ENCODE measurements at regions of chr14 and their contacts with region 1.

Region 1: GRCh38 chr14:102251161-102251560 is 53.8 kb downstream of the MOK start:
- DNase-seq: no peak
- H3K4me3 ChIP-seq: no peak overlapping the region
- H3K27ac ChIP-seq: no peak overlapping the region
- H3K4me1 ChIP-seq: no peaks in the 10 kb centered on the region
- H3K27me3 ChIP-seq: no peaks in the 10 kb centered on the region
- CTCF ChIP-seq: no peak
- EP300 ChIP-seq: no peak
- RAD21 ChIP-seq: no peak

Region 2: DNA sequence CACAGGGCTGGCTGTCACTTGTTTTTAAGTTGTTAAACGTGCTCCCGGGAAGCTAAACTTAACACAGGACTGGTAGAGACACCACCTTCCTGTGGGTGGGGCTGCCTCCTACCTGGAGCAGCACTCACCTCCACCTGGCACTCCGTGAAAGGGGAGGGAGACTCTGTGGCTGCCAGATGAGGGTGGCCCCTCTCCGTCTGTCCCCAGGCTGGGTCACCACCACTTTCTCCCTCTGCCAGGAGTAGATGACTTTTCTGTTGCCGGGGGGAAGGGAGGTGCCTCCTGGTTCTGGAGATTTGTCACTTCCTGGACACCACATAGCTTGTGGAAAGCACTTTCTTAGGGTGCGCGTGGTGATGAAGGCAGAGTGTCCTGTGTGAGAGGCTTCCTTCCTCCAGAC is 30.1 kb before region 1 on chr14:
- CTCF ChIA-PET with region 1: no interaction called
- POLR2A ChIA-PET with region 1: no interaction called
- DNase-seq: no peak
- H3K4me3 ChIP-seq: no peak overlapping the region
- H3K27ac ChIP-seq: no peak overlapping the region
- H3K4me1 ChIP-seq: peaks cover 5 to 15% of the 10 kb centered on the region in 2 experiments; a peak in 2 of 4 replicates
- H3K27me3 ChIP-seq: no peaks in the 10 kb centered on the region
- CTCF ChIP-seq: no peak
- EP300 ChIP-seq: no peak
- RAD21 ChIP-seq: no peak

Region 3: GRCh38 chr14:102235275-102235897 is 15.8 kb before region 1 on chr14:
- CTCF ChIA-PET with region 1: interaction called, 10 read pairs
- POLR2A ChIA-PET with region 1: no interaction called
- DNase-seq: peak; percentile 87
- H3K4me3 ChIP-seq: peak overlapping the region in 1 of 2 experiments; percentile 30; a peak in 1 of 4 replicates
- H3K27ac ChIP-seq: no peak overlapping the region
- H3K4me1 ChIP-seq: peaks cover 0 to 5% of the 10 kb centered on the region in 2 experiments; a peak in 1 of 4 replicates
- H3K27me3 ChIP-seq: no peaks in the 10 kb centered on the region
- CTCF ChIP-seq: peak; percentile 79
- EP300 ChIP-seq: no peak
- RAD21 ChIP-seq: peak; percentile 76

Measured in SK-N-SH (cell line).